GM12878 (cell line): ENCODE measurements at regions of chr2 and their contacts with region 1.

Region 1: GRCh38 chr2:112811841-112812306 is 24.7 kb downstream of the IL1B start:
- DNase-seq: no peak
- ATAC-seq: peak; percentile 76
- H3K4me3 ChIP-seq: no peak overlapping the region
- H3K27ac ChIP-seq: peak overlapping the region; percentile 55
- H3K4me1 ChIP-seq: peaks cover 15% of the 10 kb centered on the region
- H3K27me3 ChIP-seq: no peaks in the 10 kb centered on the region
- CTCF ChIP-seq: no peak
- EP300 ChIP-seq: no peak
- POLR2A ChIP-seq: no peak
- RAD21 ChIP-seq: 0 out of 2 replicates have a peak, but pooled peaks have one; percentile 8

Region 2: DNA sequence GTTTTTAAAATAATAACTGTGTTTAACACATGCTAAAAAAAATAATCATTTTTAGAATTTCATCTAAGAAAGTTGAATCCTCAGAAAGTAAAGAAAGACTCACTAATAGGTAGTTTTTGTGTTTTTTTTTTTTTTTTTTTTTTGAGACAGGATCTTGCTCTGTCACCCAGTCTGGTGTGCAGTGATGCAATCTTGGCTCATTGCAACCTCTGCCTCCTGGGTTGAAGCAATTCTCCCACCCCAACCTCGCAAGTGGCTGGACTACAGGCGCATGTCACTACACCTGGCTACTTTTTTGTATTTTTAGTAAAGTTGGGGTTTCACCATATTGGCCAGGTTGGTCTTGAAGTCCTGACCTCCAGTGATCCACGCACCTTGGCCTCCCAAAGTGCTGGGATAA is 54.6 kb before region 1 on chr2:
- CTCF ChIA-PET with region 1: interaction called, 8 read pairs
- POLR2A ChIA-PET with region 1: interaction called, 8 read pairs
- RAD21 ChIA-PET with region 1: interaction called, 7 read pairs
- SMC1A ChIA-PET with region 1: interaction called, 9 read pairs
- in situ Hi-C with region 1: no loop called
- intact Hi-C with region 1: loop called (anchors 2 kb)
- DNase-seq: no peak
- ATAC-seq: no peak
- H3K4me3 ChIP-seq: no peak overlapping the region
- H3K27ac ChIP-seq: no peak overlapping the region
- H3K4me1 ChIP-seq: no peaks in the 10 kb centered on the region
- H3K27me3 ChIP-seq: no peaks in the 10 kb centered on the region
- CTCF ChIP-seq: no peak
- EP300 ChIP-seq: no peak
- POLR2A ChIP-seq: no peak
- RAD21 ChIP-seq: no peak

Region 3: DNA sequence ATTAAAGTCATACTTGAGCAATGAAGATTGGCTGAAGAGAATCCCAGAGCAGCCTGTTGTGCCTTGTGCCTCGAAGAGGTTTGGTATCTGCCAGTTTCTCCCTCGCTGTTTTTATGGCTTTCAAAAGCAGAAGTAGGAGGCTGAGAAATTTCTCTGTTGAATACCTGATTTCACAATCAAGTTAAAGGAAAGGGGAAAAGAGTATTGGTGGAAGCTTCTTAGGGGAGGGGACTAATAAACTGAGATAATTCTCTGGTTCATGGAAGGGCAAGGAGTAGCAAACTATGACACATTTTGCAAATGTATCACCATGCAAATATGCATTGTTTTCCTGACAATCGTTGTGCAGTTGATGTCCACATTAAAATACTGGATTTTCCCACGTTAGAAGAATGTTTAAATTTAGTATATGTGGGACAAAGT is 24.8 kb after region 1 on chr2 and contains the start of gene IL1B:
- CTCF ChIA-PET with region 1: no interaction called
- POLR2A ChIA-PET with region 1: interaction called, 15 read pairs
- RAD21 ChIA-PET with region 1: interaction called, 7 read pairs
- SMC1A ChIA-PET with region 1: interaction called, 9 read pairs
- in situ Hi-C with region 1: no loop called
- intact Hi-C with region 1: no loop called
- DNase-seq: no peak
- ATAC-seq: peak; percentile 21
- H3K4me3 ChIP-seq: no peak within 1 kb of the TSS
- H3K27ac ChIP-seq: no peak within 1 kb of the TSS
- H3K4me1 ChIP-seq: peaks cover 34% of the 10 kb centered on the region
- H3K27me3 ChIP-seq: no peaks in the 10 kb centered on the region
- CTCF ChIP-seq: no peak
- EP300 ChIP-seq: no peak
- POLR2A ChIP-seq: no peak
- RAD21 ChIP-seq: no peak
- polyA plus RNA-seq, gene IL1B: 0.57 to 1.6 TPM

Region 4: DNA sequence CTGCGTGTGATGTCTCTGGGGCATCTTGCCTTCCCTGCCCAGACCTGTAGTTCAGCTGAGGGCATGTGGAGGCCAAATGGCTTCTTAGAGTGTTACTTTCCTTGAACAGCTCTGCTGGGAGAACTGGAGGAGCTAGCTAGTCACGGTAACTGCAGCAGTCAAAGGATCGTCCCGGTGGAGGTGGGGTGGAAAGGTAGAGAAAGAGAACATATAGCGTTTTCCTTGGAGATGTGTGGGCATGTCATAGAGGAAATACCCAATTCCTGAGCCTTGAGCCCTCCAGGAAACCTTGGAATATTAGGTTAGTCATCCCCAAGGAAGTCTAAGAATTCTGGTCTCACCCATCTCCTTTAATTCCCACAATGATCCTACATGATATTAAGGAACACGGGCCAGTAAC is 65.5 kb after region 1 on chr2:
- CTCF ChIA-PET with region 1: interaction called, 7 read pairs
- POLR2A ChIA-PET with region 1: interaction called, 4 read pairs
- RAD21 ChIA-PET with region 1: interaction called, 7 read pairs
- SMC1A ChIA-PET with region 1: interaction called, 15 read pairs
- in situ Hi-C with region 1: no loop called
- intact Hi-C with region 1: loop called (anchors 2 kb)
- DNase-seq: no peak
- ATAC-seq: no peak
- H3K4me3 ChIP-seq: no peak overlapping the region
- H3K27ac ChIP-seq: no peak overlapping the region
- H3K4me1 ChIP-seq: peaks cover 28% of the 10 kb centered on the region
- H3K27me3 ChIP-seq: no peaks in the 10 kb centered on the region
- CTCF ChIP-seq: no peak
- EP300 ChIP-seq: no peak
- POLR2A ChIP-seq: no peak
- RAD21 ChIP-seq: no peak

Region 5: GRCh38 chr2:113148606-113149560 is 337.0 kb after region 1 on chr2:
- CTCF ChIA-PET with region 1: no interaction called
- POLR2A ChIA-PET with region 1: no interaction called
- RAD21 ChIA-PET with region 1: no interaction called
- SMC1A ChIA-PET with region 1: no interaction called
- in situ Hi-C with region 1: no loop called
- intact Hi-C with region 1: no loop called
- DNase-seq: no peak
- ATAC-seq: no peak
- H3K4me3 ChIP-seq: no peak overlapping the region
- H3K27ac ChIP-seq: no peak overlapping the region
- H3K4me1 ChIP-seq: no peaks in the 10 kb centered on the region
- H3K27me3 ChIP-seq: no peaks in the 10 kb centered on the region
- CTCF ChIP-seq: no peak
- EP300 ChIP-seq: no peak
- POLR2A ChIP-seq: no peak
- RAD21 ChIP-seq: no peak